Cardiac septum (tissue), 1 donor: ENCODE measurements at regions of chr9 and their contacts with region 1.

Region 1: GRCh38 chr9:128552153-128552743 is at the start of gene SPTAN1:
- DNase-seq: peak; percentile 96
- total RNA-seq, gene SPTAN1: 380 TPM

Region 2: GRCh38 chr9:128455849-128456612 is 96.2 kb before region 1 on chr9 and contains the start of gene ODF2:
- intact Hi-C with region 1: loop called (anchors 5 kb)
- DNase-seq: peak; percentile 99
- total RNA-seq, gene ODF2: 20.8 TPM

Region 3: GRCh38 chr9:128504485-128505413 is 47.5 kb before region 1 on chr9 and contains the start of gene GLE1:
- intact Hi-C with region 1: loop called (anchors 5 kb)
- DNase-seq: peak; percentile 97
- total RNA-seq, gene GLE1: 20.2 TPM

Region 4: GRCh38 chr9:128607642-128608350 is 55.5 kb after region 1 on chr9:
- intact Hi-C with region 1: no loop called
- DNase-seq: peak; percentile 82